HEK293 (cell line): ENCODE measurements at regions of chr12 and their contacts with region 1.

Region 1: DNA sequence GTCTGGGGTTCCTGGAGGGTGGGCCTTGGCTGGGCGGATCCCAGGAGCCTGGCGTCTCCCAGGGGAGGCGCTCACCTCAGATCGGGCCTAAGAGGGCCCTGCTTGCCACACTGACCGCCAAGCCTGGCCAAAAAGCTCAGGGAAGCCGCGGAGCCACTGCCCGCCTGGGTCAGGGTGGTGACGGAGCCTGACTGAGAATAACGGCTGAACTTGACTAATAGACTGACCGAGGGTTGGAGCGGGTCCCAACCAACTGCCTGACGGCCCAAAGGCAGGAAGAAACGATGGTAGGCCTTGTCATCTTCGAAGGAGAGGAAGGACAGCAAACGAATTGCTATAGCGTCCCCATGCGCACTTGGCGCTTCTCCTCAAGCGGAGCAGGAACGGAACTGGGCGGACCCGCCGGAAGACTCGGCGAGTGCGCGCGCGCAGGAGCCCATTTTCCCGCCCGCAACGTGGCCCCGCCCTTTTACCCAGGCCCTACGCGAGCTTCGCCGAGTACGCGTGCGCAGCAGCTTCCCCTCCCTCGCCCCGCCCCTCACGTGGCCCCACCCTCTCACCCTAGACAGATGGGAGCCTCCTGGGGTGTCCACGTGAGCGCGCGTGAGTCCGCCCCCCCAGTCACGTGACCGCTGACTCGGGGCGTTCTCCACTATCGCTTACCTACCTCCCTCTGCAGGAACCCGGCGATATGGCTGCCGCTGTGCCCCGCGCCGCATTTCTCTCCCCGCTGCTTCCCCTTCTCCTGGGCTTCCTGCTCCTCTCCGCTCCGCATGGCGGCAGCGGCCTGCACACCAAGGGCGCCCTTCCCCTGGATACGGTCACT is at the starts of genes ERP29 and TMEM116:
- H3K4me3 ChIP-seq: peak within 1 kb of the TSS; percentile 97
- H3K27ac ChIP-seq: peak within 1 kb of the TSS; percentile 98
- H3K4me1 ChIP-seq: peaks cover 5% of the 10 kb centered on the region; the same call in 1 of the 2 replicates
- CTCF ChIP-seq: peak; percentile 70

Region 2: GRCh38 chr12:111942557-111942956 is 70.4 kb before region 1 on chr12:
- CTCF ChIA-PET with region 1: interaction called, 10 read pairs
- POLR2A ChIA-PET with region 1: interaction called, 6 read pairs
- H3K4me3 ChIP-seq: no peak overlapping the region
- H3K27ac ChIP-seq: no peak overlapping the region
- H3K4me1 ChIP-seq: no peaks in the 10 kb centered on the region
- CTCF ChIP-seq: no peak

Region 3: DNA sequence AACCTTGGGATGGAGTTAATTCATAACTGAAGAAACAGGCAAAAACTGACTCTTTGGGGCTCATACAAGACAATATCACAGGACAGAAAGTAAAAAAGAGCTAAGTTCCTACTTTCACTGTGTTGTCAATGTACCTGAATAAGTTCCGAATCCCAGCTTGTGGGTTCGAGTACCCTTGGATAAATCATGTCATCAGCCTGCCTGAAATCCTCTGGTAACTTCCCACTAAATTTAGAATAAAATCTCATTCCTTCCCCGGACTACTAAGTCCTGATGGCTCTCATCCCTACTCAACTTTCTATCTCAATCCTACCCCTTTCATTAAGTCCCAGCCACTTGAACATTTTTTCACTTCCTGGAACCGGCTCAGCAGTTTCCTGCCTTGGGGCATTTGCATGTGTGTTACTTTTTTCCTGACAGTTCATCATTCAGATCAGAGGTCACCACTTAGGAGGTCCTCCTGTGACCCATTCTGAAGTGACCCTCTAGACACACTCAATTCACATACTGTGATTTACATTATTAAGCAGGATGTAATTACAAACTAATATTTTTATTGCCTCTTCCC is 12.9 kb after region 1 on chr12:
- CTCF ChIA-PET with region 1: interaction called, 3 read pairs
- POLR2A ChIA-PET with region 1: interaction called, 19 read pairs
- H3K4me3 ChIP-seq: no peak overlapping the region
- H3K27ac ChIP-seq: no peak overlapping the region
- H3K4me1 ChIP-seq: no peaks in the 10 kb centered on the region
- CTCF ChIP-seq: no peak